Sciatic nerve (tissue), 2 donors: ENCODE measurements at regions of chr14 and their contacts with region 1.

Region 1: GRCh38 chr14:54169254-54169924 is 212.8 kb upstream of the BMP4 start:
- DNase-seq: no peak
- ATAC-seq: peak; percentile 72

Region 2: GRCh38 chr14:53953002-53953827 is 216.2 kb before region 1 on chr14:
- intact Hi-C with region 1: loop called (anchors 10 kb)
- DNase-seq: peak; percentile 93
- ATAC-seq: peak; percentile 90

Region 3: DNA sequence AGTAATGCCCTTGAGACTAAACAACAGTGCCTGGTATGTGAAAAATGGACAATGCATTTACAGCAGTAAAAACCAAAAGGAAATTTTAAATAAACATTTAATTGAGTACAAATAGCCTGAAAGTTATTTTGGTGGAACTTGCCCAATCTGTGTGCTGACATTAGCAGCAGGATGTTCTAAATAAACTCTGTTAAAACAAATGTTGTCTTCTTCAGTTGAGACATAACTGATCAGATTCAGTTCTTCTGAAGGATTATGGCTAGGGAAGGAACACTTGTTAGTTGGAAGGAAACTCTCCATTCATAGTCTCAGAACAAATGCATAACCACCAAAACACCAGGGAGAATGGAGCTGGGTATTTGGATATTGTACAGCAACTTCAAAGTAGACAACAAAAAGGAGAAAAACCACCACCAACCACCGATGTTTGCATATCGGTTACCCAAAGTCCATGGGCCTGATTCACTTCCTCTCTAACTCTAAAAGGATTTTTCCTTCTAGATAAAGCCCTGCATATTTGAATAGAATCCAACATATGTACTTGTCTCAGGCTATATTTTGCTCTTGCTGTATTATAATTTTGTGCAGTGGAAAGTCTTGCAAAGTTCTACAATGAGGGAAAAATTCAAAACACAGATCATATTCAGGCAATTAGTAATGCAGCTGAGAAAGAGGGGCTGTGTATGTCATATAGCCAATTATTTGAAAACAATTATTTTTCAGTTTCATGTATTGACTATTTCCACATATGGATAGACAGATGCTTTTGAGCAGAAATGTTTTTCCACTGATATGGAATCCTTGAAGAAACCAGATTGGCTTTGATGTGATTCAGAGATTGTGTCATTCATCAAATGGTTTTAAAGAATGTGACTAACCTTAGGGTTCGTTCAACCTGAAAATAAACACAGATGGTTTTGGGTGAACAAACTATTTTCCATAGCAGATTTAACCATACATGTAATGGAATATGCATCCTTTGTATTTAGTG is 60.6 kb before region 1 on chr14:
- intact Hi-C with region 1: no loop called
- DNase-seq: no peak
- ATAC-seq: no peak

Region 4: DNA sequence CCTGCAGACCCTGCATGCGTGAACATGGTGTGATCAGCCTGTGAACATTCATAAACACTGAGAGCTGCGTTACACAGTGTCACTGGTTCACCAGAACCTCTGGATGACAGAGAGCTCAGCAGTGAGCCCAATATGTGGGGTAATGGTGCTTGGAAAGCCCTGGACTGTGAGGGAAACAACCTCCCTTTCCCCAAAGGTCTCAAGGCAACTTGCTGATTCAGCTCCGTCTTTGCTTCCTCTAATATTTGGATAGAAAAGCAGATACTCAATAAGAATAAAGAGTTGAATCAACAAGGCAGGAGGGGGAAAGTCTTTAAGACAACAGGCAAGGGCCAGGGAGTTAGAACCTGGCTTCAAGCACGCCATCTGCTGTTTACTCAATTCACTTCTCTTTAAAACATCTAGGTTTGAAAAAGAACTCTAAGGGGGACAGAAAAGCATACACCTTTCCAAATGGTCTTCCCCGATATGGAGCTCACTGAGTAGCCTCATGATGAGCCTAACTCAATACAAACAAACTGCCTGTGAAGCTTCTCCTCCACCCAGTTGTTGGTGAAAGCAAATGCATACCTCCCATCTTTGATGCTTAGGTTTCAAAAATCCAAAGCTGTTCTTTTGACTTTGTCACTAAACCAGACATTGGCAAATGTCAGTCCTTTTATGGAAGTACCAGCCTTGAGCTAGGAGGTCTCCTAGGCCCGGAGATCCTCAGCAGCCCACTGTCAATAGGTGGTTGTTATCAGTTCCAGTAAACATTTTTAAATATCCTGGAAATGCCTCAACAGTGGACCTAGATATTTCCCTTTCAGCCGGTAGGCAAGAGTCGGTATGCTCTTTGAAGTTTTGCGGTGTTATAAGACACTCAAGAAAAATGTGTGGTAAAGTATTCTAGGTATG is 473.7 kb after region 1 on chr14:
- intact Hi-C with region 1: no loop called
- DNase-seq: no peak
- ATAC-seq: peak; percentile 31